GM13976 (cell line): ENCODE measurements at regions of chr10 and their contacts with region 1.

Region 1: GRCh38 chr10:74262856-74263255 is 111.8 kb downstream of the ADK start:
- DNase-seq: no peak
- CTCF ChIP-seq: no peak

Region 2: DNA sequence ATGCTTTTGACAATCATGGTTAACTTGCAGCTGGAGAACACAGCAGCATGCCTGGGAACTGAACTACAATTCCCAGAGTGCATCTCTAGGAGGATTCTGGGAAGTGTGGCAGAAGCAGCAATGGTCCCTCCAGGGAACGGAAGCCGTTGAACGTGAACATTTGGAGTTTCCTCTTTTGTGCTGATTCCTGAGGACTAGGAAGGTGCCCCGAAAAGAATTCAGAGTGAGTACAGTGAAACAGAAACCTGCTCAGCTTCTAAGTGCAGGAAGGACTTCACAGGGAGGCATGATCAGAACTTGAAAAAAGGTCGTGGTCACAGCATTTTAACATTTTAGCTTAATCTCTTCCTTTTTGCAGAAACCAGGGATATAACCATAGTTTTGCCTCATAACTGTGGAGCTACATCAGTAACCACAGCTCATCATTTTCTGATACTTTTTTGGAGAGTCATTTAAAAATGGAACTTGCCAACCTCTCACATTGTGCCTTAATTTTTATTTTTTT is 1152.5 kb before region 1 on chr10 and contains the start of gene NUDT13:
- in situ Hi-C with region 1: no loop called
- DNase-seq: peak; percentile 68
- CTCF ChIP-seq: no peak

Region 3: DNA sequence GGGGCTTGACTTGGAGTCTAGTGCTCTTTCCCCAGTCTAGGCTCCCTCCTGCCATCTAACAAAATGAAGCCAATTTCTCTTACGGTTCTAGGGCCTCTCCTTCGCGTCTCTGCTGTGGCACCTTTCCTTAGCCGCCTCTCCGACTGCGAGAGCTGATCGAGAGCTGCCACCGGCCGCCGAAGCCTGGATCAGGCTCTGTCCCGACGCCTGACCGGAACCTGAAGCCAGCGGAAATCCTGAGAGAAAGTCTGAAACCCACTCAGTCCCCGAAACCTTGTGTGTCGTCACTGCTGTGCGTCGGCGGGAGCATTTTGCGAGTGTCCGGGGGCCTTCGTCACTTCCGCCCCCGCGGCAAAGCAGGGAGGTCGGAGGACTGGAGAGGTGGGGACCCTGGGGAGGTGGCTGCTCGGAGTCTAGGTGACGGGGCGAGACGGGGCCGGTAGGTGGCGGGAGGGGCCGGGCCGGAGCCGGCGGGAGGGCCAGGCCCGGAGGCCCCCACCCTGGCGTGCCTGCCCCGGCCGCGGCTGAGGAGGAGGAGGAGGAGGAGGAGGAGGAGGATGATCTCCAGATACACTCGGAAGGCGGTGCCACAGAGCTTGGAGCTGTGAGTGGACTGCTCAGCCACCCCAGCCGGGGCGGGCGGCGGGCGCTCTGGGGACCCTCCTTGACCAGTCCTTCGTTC is 1094.9 kb before region 1 on chr10 and contains the starts of genes ECD and FAM149B1:
- in situ Hi-C with region 1: no loop called
- DNase-seq: peak; percentile 94
- CTCF ChIP-seq: peak; percentile 19

Region 4: DNA sequence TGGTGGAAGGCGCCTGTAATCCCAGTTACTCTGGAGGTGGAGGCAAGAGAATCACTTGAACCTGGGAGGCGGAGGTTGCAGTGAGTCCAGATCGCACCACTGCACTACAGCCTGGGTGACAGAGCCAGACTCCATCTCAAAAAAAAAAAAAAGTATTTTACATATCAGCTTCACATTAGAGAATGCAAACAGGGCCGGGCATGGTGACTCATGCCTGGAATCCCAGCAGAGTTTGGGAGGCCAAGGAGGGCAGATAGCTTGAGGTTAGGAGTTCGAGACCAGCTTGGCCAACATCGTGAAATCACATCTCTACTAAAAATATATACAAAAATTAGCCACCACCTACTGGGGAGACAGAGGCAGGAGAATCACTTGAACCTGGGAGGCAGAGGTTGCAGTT is 703.3 kb before region 1 on chr10:
- in situ Hi-C with region 1: no loop called
- DNase-seq: no peak
- CTCF ChIP-seq: no peak

Region 5: GRCh38 chr10:74738985-74739567 is 476.2 kb after region 1 on chr10:
- in situ Hi-C with region 1: loop called (anchors 10 kb)
- DNase-seq: peak; percentile 61
- CTCF ChIP-seq: peak; percentile 25

Region 6: GRCh38 chr10:75029857-75030256 is 767.0 kb after region 1 on chr10:
- in situ Hi-C with region 1: loop called (anchors 10 kb)
- DNase-seq: no peak
- CTCF ChIP-seq: no peak

Region 7: GRCh38 chr10:75099952-75100763 is 837.3 kb after region 1 on chr10:
- in situ Hi-C with region 1: loop called (anchors 5 kb)
- DNase-seq: peak; percentile 93
- CTCF ChIP-seq: peak; percentile 95